ENCODE measurements at regions of chr3 and their contacts with region 1.

Region 1: DNA sequence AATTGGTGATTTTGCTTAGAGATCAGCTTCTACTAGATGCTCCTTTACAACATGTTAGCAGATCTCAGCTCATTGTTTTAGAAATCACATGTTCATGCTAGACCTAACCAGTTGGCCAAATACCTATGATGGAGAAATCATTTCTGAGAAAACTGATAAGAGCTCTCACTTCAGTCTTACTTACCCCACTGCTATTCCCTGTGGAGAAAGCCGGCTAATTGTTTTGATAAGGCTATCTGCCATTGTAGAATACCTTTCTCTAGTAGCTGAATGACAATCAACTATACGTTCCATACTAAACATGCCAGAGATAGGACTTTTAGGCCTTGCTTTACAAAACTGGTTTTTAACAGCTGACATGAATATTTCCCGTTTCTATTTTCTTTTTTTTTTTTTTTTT is 26.2 kb upstream of the MLF1 start:
- DNase-seq: no peak
- ATAC-seq: no peak

Region 2: DNA sequence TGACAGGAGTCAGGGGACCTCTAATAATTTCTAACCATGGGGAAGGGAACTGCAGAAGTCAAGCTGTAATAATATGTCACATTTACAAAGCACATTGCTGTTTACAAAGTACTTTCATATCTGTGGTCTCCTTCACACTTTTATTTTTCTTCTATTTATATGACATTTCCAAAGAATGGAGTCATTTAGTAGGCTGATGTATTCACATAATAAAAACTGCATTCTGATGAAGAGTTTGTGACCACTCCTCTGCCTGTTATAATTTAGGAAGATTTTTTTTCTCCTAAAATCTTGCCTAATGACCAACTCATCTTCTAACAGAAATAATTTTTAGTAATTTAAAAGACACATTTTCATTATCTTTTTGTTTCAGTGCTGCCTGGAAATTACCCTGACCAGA is 769.4 kb before region 1 on chr3:
- intact Hi-C with region 1: loop called (anchors 5 kb)
- DNase-seq: no peak
- ATAC-seq: no peak

Region 3: DNA sequence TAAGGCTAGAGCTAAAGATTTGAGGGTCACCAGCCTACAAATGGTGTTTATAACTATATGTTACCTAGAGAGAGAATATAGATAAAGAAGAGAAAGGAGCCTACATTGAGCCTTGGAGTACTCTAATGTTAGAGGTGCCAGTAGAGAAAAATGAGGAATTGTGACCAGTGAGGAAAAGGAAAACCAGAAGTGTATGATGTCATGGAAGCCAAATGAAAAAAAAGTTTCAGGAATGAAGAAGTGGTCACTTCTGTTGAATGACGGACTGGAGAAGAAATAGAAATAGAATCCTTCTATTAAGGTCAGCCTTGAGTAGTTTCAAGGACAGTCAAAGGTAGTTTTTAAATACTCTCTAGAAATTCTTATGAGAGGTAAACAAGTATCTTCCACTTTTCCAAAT is 25.0 kb before region 1 on chr3:
- intact Hi-C with region 1: loop called (anchors 2 kb)
- DNase-seq: no peak
- ATAC-seq: no peak